Heart left ventricle (tissue), 16 donors: ENCODE measurements at regions of chr15 and their contacts with region 1.

Region 1: GRCh38 chr15:49989498-49989897 is 129.5 kb downstream of the ATP8B4 start:
- DNase-seq: peak in 2 of 5 donors; percentile 27 to 30
- ATAC-seq: peak; percentile 58 to 79 (median 66)
- H3K4me3 ChIP-seq: no peak overlapping the region
- H3K27ac ChIP-seq: peak overlapping the region in 10 of 12 donors; percentile 12 to 69 (median 52)
- H3K4me1 ChIP-seq: peaks cover 0 to 55% (median 24%) of the 10 kb centered on the region in 12 donors
- H3K27me3 ChIP-seq: no peaks in the 10 kb centered on the region
- CTCF ChIP-seq: no peak
- POLR2A ChIP-seq: no peak

Region 2: GRCh38 chr15:49875392-49875791 is 114.1 kb before region 1 on chr15:
- intact Hi-C with region 1: no loop called
- DNase-seq: no peak
- ATAC-seq: no peak
- H3K4me3 ChIP-seq: peak overlapping the region in 2 of 12 donors; percentile 1 to 20
- H3K27ac ChIP-seq: peak overlapping the region; percentile 29 to 88 (median 78)
- H3K4me1 ChIP-seq: peaks cover 0 to 34% (median 5%) of the 10 kb centered on the region in 12 donors
- H3K27me3 ChIP-seq: no peaks in the 10 kb centered on the region
- CTCF ChIP-seq: no peak
- POLR2A ChIP-seq: no peak

Region 3: GRCh38 chr15:49901996-49902684 is 87.4 kb before region 1 on chr15:
- intact Hi-C with region 1: loop called in 1 of 10 experiments (anchors 5 kb)
- DNase-seq: no peak
- ATAC-seq: peak in 2 of 4 donors; percentile 26 to 42
- H3K4me3 ChIP-seq: peak overlapping the region in 2 of 12 donors; percentile 2 to 14
- H3K27ac ChIP-seq: peak overlapping the region; percentile 30 to 88 (median 71)
- H3K4me1 ChIP-seq: peaks cover 0 to 44% (median 15%) of the 10 kb centered on the region in 12 donors
- H3K27me3 ChIP-seq: no peaks in the 10 kb centered on the region
- CTCF ChIP-seq: peak in 7 of 12 donors; percentile 16 to 46 (median 38)
- POLR2A ChIP-seq: no peak

Region 4: GRCh38 chr15:49918121-49918520 is 71.4 kb before region 1 on chr15:
- intact Hi-C with region 1: loop called in 1 of 10 experiments (anchors 5 kb)
- DNase-seq: peak in 2 of 5 donors; percentile 29 to 31
- ATAC-seq: peak in 2 of 4 donors; percentile 52 to 60
- H3K4me3 ChIP-seq: no peak overlapping the region
- H3K27ac ChIP-seq: peak overlapping the region in 2 of 12 donors; percentile 7 to 38
- H3K4me1 ChIP-seq: peaks cover 0 to 24% (median 0%) of the 10 kb centered on the region in 12 donors
- H3K27me3 ChIP-seq: no peaks in the 10 kb centered on the region
- CTCF ChIP-seq: no peak
- POLR2A ChIP-seq: no peak